K562 (cell line): ENCODE measurements at regions of chr6 and their contacts with region 1.

Region 1: GRCh38 chr6:139448051-139448649 is 73.7 kb upstream of the CITED2 start:
- DNase-seq: peak in 3 of 4 experiments; percentile 27 to 70 (median 35)
- ATAC-seq: peak; percentile 30
- H3K4me3 ChIP-seq: no peak overlapping the region
- H3K27ac ChIP-seq: peak overlapping the region; percentile 87
- H3K4me1 ChIP-seq: peaks cover 11 to 65% of the 10 kb centered on the region in 2 experiments
- H3K27me3 ChIP-seq: no peaks in the 10 kb centered on the region
- CTCF ChIP-seq: no peak
- EP300 ChIP-seq: peak; percentile 66
- POLR2A ChIP-seq: no peak
- RAD21 ChIP-seq: 0 out of 4 replicates have a peak, but pooled peaks of 1 of the 2 experiments have one; percentile 28

Region 2: GRCh38 chr6:139533573-139534471 is 85.7 kb after region 1 on chr6:
- CTCF ChIA-PET with region 1: no interaction called
- POLR2A ChIA-PET with region 1: no interaction called
- in situ Hi-C with region 1: no loop called
- intact Hi-C with region 1: loop called (anchors 2 kb)
- DNase-seq: peak; percentile 70 to 95 (median 78)
- ATAC-seq: peak; percentile 94
- H3K4me3 ChIP-seq: 0 out of 2 replicates have a peak overlapping the region, but pooled peaks have one; percentile 5
- H3K27ac ChIP-seq: peak overlapping the region; percentile 70
- H3K4me1 ChIP-seq: peaks cover 10 to 44% of the 10 kb centered on the region in 2 experiments; a peak in 4 of 5 replicates
- H3K27me3 ChIP-seq: no peaks in the 10 kb centered on the region
- CTCF ChIP-seq: no peak
- EP300 ChIP-seq: peak; percentile 75
- POLR2A ChIP-seq: no peak; the same call in 1 of the 2 replicates
- RAD21 ChIP-seq: peak in 1 of 2 experiments; percentile 20; a peak in 1 of 4 replicates